H1 (cell line): ENCODE measurements at regions of chr6 and their contacts with region 1.

Region 1: GRCh38 chr6:149565527-149566409 is at the start of gene GINM1:
- DNase-seq: peak; percentile 80 to 98
- H3K4me3 ChIP-seq: peak within 1 kb of the TSS; percentile 88 to 100 (median 98)
- H3K27ac ChIP-seq: peak within 1 kb of the TSS; percentile 85
- H3K4me1 ChIP-seq: no peaks in the 10 kb centered on the region; a peak in 1 of 7 replicates
- H3K27me3 ChIP-seq: no peaks in the 10 kb centered on the region
- CTCF ChIP-seq: peak; percentile 61 to 81 (median 74)
- EP300 ChIP-seq: no peak
- POLR2A ChIP-seq: no peak; a peak in 1 of 3 replicates
- RAD21 ChIP-seq: peak; percentile 61 to 62
- total RNA-seq, gene GINM1: 21.6 and 24.0 TPM in 2 replicates

Region 2: DNA sequence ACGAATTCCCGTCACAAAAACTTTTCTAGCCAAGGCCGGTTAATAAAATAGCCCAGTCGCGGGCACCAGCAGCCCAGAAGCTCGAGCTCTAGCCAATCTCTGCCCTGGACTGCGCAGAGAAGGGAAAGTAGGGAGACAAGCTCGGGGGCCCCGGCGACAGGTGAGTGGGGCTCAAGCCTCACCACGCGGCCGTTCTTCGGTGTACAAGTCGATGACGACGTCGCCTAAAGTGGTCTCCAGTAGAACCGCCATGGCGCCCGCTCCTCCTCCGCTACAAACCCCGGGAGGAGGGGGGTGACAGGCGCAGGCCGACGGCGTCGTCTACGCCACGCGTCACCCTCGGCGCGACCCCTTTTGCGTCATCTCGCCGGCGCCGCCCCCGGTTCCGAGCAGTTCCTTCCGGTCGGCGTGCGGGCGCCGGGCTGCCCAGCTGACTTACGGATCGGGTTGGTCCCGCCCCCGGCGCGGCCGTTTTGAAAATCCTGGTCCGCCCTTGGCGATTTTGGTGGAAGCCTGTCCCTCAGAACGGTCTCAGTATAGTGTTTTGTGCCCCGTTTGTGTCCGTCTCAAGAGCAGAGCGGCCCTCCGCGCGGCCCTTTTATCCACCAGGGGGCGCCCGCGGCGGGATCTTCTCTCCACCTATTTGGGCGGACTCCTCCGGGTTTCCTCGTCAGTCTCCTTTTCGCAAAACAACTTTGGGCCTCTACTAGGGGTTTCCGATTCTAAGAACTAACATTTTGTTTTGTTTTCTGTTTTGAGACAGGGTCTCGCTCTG is 19.8 kb before region 1 on chr6 and contains the start of gene PPIL4:
- CTCF ChIA-PET with region 1: interaction called, 108 read pairs
- POLR2A ChIA-PET with region 1: interaction called, 25 read pairs
- DNase-seq: peak; percentile 72 to 98
- H3K4me3 ChIP-seq: peak within 1 kb of the TSS; percentile 86 to 98 (median 94)
- H3K27ac ChIP-seq: peak within 1 kb of the TSS; percentile 88
- H3K4me1 ChIP-seq: no peaks in the 10 kb centered on the region; a peak in 1 of 7 replicates
- H3K27me3 ChIP-seq: no peaks in the 10 kb centered on the region; a peak in 1 of 7 replicates
- CTCF ChIP-seq: peak; percentile 55 to 75 (median 62)
- EP300 ChIP-seq: 0 out of 3 replicates have a peak, but pooled peaks of 1 of the 2 experiments have one; percentile 18
- POLR2A ChIP-seq: peak; percentile 59 to 95
- RAD21 ChIP-seq: peak; percentile 27 to 45; a peak in 3 of 4 replicates
- total RNA-seq, gene PPIL4: 33.2 TPM in 2 replicates

Region 3: GRCh38 chr6:149551920-149552319 is 13.8 kb before region 1 on chr6:
- CTCF ChIA-PET with region 1: interaction called, 108 read pairs
- POLR2A ChIA-PET with region 1: interaction called, 25 read pairs
- DNase-seq: no peak
- H3K4me3 ChIP-seq: no peak overlapping the region
- H3K27ac ChIP-seq: no peak overlapping the region
- H3K4me1 ChIP-seq: no peaks in the 10 kb centered on the region
- H3K27me3 ChIP-seq: no peaks in the 10 kb centered on the region; a peak in 1 of 7 replicates
- CTCF ChIP-seq: no peak
- EP300 ChIP-seq: no peak
- POLR2A ChIP-seq: no peak
- RAD21 ChIP-seq: no peak

Region 4: DNA sequence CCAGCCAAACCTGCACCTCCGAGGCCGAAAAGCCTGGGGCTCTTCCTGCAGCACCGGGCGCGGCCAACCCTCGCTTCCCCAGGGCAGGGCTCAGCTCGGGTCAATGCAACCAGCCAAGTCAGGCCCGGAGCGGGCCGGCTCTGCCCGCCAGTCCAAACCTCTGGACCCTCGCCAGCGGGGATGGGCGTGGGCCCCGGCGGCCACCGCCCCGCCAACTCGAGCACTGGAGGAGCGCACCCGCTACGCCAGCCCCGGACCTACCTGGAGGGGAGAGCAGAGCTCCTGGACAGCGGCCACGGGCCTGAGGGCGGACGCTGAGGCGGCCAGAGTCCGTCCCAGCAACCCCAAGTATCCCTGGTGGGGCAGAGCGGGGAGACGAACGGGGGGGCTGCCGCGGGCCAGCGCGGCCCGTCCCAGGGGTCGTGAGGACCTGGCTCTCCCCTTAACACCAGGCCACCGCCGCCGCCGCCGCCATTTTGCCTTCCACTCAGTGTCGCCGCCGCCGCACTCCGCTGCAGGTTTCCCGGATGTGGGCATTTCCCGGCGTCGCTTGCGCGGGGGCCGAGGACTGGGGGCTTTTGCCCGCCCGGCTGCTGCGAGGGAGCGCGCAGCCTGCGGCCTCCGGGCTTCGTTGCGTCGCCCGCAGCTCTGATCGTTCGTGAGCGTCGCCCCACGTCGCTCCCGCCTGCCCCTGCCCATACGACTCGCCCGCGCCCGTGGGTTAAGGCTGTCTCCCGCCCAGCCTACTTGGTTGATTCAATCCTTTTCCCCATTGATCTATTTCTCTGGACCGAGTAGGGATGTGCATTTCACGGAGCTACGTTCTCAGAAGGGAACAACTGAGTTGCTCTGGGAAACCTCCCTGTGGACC is 152.1 kb after region 1 on chr6 and contains the start of gene LATS1:
- CTCF ChIA-PET with region 1: interaction called, 3 read pairs
- POLR2A ChIA-PET with region 1: interaction called, 13 read pairs
- DNase-seq: peak in 1 of 2 experiments; percentile 95
- H3K4me3 ChIP-seq: peak within 1 kb of the TSS; percentile 81 to 93 (median 86)
- H3K27ac ChIP-seq: peak within 1 kb of the TSS; percentile 93
- H3K4me1 ChIP-seq: peaks cover 0 to 4% (median 2%) of the 10 kb centered on the region in 4 experiments; a peak in 3 of 7 replicates
- H3K27me3 ChIP-seq: no peaks in the 10 kb centered on the region
- CTCF ChIP-seq: 0 out of 4 replicates have a peak, but pooled peaks of 1 of the 3 experiments have one; percentile 9
- EP300 ChIP-seq: no peak
- POLR2A ChIP-seq: peak; percentile 72 to 98
- RAD21 ChIP-seq: no peak
- total RNA-seq, gene LATS1: 20.3 and 21.7 TPM in 2 replicates